GM23248 (cell line): ENCODE measurements at regions of chr17 and their contacts with region 1.

Region 1: GRCh38 chr17:36629252-36629847 is 28.0 kb downstream of the MRM1 start:
- DNase-seq: peak; percentile 72
- H3K4me3 ChIP-seq: no peak overlapping the region
- H3K27ac ChIP-seq: no peak overlapping the region
- H3K4me1 ChIP-seq: no peaks in the 10 kb centered on the region
- H3K27me3 ChIP-seq: no peaks in the 10 kb centered on the region; the same call in 1 of the 2 replicates

Region 2: GRCh38 chr17:37047631-37048104 is 418.3 kb after region 1 on chr17:
- in situ Hi-C with region 1: loop called (anchors 5 kb)
- DNase-seq: peak; percentile 79
- H3K4me3 ChIP-seq: no peak overlapping the region
- H3K27ac ChIP-seq: no peak overlapping the region
- H3K4me1 ChIP-seq: 0 out of 2 replicates have a peak, but pooled peaks cover 3% of the 10 kb centered on the region
- H3K27me3 ChIP-seq: no peaks in the 10 kb centered on the region

Region 3: DNA sequence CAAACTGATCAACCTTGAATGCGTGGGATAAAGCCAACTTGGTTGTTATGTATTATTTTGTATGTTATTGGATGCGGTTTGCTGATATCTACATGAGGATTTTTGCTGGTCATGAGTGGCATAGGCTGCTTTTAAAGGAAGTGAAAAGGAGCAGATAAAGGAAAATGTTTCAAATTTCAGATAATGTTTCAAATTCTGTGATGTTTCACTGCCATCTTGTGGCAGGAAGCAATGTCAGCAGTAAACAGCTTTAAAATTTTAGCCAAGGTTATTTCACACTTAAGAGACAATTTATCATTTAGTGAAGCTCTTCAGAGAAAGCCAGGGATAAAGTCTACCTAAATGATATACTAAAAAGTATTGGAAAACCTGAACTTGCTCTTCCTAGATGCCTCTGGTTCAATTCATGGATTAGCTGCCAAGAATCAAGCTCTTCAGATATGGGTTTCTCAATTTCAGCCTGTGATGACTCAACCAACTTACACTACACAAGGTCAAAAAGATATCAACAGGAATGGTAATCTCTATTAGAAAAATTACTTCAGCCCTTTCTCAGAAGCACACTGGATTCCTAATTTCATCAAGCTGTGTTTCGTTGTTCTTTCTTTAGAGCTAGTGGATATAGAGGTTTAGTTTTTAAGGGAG is 610.5 kb after region 1 on chr17:
- in situ Hi-C with region 1: loop called (anchors 25 kb)
- DNase-seq: peak; percentile 52
- H3K4me3 ChIP-seq: no peak overlapping the region
- H3K27ac ChIP-seq: no peak overlapping the region
- H3K4me1 ChIP-seq: no peaks in the 10 kb centered on the region
- H3K27me3 ChIP-seq: no peaks in the 10 kb centered on the region